Activated naive CD4-positive, alpha-beta T cell treated with anti-CD3 and anti-CD28 coated beads, Interleukin-2, amount 10 ng/mL, durations not matched to agents 7 days and 5 days (primary cell): ENCODE measurements at regions of chr22 and their contacts with region 1.

Region 1: GRCh38 chr22:30634471-30635233 is 929 bp upstream of the SLC35E4 start:
- DNase-seq: peak; percentile 93
- H3K4me3 Mint-ChIP-seq: peak overlapping the region; percentile 70
- H3K27ac Mint-ChIP-seq: peak overlapping the region; percentile 92
- H3K4me1 Mint-ChIP-seq: peaks cover 27% of the 10 kb centered on the region
- H3K27me3 Mint-ChIP-seq: no peaks in the 10 kb centered on the region

Region 2: DNA sequence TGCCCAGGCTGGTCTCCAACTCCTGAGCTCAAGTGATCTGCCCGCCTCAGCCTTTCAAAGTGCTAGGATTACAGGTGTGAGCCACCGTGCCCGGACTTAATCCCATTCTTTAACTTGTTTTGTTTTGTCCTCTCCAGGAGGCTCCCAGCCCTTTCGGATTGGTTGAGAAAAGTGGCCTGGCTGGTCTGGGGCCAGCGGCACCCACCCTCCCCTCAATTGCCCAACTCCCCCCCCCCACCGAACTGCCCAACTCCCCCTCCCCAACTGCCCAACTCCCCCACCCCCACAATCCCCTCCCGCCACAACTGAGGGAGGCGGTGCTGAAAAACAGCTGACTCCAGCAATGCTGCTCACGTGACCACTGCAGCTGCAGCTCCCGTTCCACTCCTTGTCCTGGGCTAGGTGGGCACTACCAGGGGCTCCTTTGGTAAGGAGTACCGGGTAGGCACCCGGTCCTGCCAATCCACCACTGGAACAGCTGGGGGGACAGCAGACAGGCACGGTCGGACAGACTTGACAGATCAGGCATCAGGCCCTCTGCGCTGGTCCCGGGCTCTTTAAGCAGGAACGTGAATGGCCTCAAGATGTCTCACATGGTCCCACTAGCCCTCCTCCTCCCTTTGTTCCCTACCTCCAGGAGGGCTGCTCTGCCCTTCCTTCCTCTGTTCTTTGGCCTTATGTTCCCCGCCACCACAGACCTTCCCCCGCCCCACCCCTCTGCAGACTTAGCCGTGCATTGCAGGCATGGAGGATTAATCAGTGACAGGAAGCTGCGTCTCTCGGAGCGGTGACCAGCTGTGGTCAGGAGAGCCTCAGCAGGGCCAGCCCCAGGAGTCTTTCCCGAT is 28.0 kb before region 1 on chr22 and contains the start of gene TCN2:
- CTCF ChIA-PET with region 1: interaction called, 10 read pairs
- DNase-seq: peak; percentile 61
- H3K4me3 Mint-ChIP-seq: peak within 1 kb of the TSS; percentile 65
- H3K27ac Mint-ChIP-seq: no peak within 1 kb of the TSS
- H3K4me1 Mint-ChIP-seq: peaks cover 47% of the 10 kb centered on the region
- H3K27me3 Mint-ChIP-seq: peaks cover 40% of the 10 kb centered on the region

Region 3: DNA sequence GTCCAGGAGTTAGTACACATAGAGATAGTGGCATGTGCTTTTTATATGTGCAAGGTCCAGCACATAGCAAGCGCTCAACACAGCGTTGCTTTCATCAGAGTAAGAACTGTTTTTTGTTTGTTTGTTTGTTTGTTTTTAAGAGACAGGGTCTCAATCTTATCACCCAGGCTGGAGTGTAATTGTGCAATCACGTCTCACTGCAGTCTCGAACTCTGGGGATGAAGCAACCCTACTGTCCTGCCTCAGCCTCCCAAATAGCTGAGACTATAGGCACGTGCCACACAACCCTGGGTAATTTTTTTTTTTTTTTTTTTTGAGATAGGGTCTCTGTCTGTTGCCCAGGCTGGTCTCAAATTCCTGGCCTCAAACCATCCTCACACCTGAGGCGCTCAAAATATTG is 16.8 kb before region 1 on chr22:
- CTCF ChIA-PET with region 1: interaction called, 15 read pairs
- DNase-seq: no peak
- H3K4me3 Mint-ChIP-seq: no peak overlapping the region
- H3K27ac Mint-ChIP-seq: no peak overlapping the region
- H3K4me1 Mint-ChIP-seq: no peaks in the 10 kb centered on the region
- H3K27me3 Mint-ChIP-seq: no peaks in the 10 kb centered on the region

Region 4: DNA sequence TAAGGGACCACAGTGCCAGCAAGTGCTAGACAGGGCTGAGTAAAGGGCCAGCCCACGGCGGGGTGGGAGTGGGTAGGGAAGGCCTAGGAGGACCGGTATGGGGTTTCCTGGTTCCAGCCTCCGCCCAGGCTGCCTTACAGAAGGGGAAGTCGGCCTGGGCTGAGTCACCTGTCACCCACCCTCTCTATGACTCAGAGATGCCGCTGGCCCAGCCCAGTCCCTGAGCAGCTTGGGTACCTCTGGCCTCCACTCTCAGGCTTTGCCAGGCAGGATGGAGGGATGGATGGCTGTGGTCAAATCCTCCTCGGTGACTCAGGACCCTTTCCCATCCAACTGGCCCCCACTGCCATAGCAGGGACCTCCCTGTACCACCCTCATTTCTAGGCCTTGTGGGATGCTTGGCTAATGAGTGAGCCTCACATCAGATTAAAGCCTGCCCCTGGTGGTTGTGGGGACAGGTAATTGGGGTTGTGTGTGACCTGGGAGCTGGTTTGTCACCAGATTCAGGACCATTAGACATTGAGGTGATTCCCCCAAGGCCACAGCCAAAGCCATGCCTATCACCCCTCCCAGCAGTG is 14.9 kb after region 1 on chr22:
- CTCF ChIA-PET with region 1: interaction called, 24 read pairs
- DNase-seq: peak; percentile 77
- H3K4me3 Mint-ChIP-seq: no peak overlapping the region
- H3K27ac Mint-ChIP-seq: peak overlapping the region; percentile 75
- H3K4me1 Mint-ChIP-seq: peaks cover 31% of the 10 kb centered on the region
- H3K27me3 Mint-ChIP-seq: no peaks in the 10 kb centered on the region

Region 5: DNA sequence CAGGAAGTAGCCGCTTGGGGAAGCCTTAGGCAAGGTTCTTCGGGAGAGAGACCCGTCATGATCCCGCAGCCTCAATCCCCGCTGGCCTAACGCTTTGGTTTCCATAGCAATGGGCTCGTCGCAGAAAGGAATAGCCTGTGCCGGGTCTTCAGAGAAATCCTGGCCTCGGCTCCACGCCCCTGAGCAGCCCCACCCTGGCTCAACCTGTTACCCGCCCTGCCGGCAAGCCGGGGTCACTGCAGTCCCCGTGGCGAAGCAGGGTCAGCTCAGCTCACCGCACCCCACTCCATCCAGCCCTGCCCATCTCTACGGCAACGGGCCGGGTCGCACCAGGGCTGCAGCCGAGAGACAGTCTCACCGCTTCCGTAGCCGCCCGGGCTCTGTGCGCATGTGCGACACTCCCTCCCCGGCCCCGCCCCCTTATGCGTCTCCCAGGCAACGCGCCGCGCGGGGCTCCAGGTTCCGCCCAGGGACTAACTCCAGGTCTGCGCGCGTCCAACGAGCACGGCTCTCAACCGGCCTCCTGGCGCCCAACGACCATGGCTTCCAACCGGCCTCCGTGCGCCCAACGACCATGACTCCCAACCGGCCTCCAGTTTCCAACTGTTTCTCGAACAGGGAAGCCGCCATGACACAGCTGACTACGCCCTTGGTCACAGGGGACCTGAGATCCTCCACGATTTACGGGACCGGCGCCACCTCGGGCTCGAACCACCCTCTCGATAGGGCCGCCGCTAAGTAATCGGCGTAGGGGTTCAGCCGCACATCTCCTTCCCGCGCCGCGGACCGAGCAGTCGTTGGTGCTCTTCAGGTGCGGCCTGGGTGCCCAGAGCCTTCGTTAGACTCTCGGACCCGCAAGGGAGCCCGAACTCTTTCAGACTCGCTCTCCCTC is 33.1 kb after region 1 on chr22 and contains the start of gene DUSP18:
- CTCF ChIA-PET with region 1: interaction called, 19 read pairs
- DNase-seq: peak; percentile 95
- H3K4me3 Mint-ChIP-seq: peak within 1 kb of the TSS; percentile 97
- H3K27ac Mint-ChIP-seq: peak within 1 kb of the TSS; percentile 84
- H3K4me1 Mint-ChIP-seq: peaks cover 16% of the 10 kb centered on the region
- H3K27me3 Mint-ChIP-seq: peaks cover 23% of the 10 kb centered on the region

Region 6: GRCh38 chr22:30742291-30743256 is 107.9 kb after region 1 on chr22:
- CTCF ChIA-PET with region 1: interaction called, 15 read pairs
- DNase-seq: no peak
- H3K4me3 Mint-ChIP-seq: no peak overlapping the region
- H3K27ac Mint-ChIP-seq: peak overlapping the region; percentile 61
- H3K4me1 Mint-ChIP-seq: peaks cover 63% of the 10 kb centered on the region
- H3K27me3 Mint-ChIP-seq: no peaks in the 10 kb centered on the region